HepG2 (cell line): ENCODE measurements at regions of chr2 and their contacts with region 1.

Region 1: DNA sequence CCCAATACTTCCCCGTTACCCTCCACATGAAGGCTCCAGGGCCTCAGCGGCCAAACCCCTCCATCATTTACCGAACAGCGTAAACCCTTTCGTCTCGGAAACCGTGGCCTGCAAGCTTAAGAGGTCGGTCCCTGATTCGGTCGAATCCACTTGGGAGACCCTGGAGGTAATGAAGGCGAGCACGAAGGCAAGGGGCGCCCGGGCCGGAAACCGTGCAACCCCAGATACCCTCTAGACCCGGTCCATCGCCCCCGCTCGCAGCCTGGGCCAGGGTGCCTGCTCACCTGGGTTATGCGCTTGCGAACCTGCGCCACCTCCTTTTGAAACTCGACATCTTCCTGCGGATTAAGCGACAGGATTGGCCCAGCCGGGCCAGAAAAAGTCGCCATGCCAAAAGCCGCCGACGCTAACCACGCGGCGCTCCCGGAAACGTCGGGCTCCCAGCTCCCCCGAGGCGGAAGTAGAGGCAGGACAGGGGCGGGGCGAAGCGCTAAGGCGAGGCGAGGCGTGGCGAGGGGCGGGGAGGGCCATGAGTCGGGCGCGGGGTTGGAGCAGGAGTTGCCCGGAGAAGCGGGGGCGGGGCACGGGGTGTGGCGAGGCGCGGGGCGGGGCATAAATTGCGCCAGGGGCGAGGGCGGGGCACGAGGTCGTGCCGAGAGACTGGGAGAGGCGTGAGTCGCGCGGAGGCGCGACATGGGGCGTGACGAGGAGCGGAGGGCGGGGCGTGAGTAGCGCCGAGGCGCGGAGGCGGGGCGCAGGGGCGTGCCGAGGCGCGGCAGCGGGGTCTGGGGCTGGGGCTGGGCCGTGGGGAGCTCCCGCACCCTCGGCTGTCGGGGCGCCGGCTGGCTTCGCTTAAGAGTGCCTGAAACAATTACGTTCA is at the start of gene NIFK:
- DNase-seq: peak; percentile 96
- ATAC-seq: peak; percentile 95
- H3K4me3 ChIP-seq: peak within 1 kb of the TSS; percentile 87 to 100 (median 91)
- H3K27ac ChIP-seq: peak within 1 kb of the TSS; percentile 66
- H3K4me1 ChIP-seq: peaks cover 27% of the 10 kb centered on the region
- H3K27me3 ChIP-seq: peaks cover 2 to 25% of the 10 kb centered on the region in 2 experiments; a peak in 2 of 5 replicates
- CTCF ChIP-seq: no peak; the same call in none of the 2 replicates
- EP300 ChIP-seq: peak in 1 of 2 experiments; percentile 7; a peak in 1 of 4 replicates
- POLR2A ChIP-seq: peak; percentile 75 to 84
- RAD21 ChIP-seq: peak; percentile 37
- total RNA-seq, gene NIFK: 105 and 178 TPM in 2 replicates

Region 2: DNA sequence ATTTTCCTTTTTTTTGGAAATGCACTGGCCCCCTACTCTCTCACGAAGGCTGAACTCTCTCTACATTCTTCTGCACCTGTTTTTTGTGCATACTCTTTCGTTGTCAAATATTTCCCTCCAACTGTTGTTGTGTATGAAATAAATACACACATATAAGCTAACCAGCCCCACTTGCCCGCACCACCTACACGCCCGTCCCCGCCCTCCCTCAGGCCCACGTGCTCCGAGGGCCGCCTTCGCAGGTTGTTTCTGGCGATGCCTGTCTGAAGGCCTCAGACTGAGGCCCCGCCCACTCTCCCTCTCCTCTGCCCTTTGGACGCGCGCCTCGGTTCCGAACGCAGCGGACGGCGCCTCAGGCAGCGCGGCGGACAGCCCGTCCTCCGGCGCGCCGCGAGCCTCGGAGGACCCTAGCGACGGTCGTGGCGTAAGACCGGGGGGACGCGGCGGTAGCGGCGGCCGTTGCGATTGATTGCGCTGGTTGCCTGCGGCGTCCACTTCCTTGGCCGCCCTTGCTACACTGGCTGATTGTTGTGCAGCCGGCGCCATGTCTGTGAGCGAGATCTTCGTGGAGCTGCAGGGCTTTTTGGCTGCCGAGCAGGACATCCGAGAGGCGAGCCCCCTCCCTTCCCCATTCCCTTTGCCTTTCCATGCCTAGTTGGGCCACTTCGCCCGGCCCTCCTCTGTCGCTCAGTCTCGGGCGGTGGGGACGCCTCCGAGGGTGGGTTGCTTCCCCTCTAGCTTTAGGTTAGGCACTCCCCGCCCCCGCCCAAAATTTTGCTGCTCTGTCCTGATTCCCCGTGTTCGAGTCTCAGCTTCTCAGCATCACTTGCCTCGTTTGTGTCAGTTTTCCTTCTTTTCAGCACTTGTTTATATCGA is 18.8 kb after region 1 on chr2 and contains the start of gene TSN:
- CTCF ChIA-PET with region 1: no interaction called
- POLR2A ChIA-PET with region 1: interaction called, 23 read pairs
- in situ Hi-C with region 1: no loop called
- intact Hi-C with region 1: loop called (anchors 2 kb)
- DNase-seq: peak; percentile 97
- ATAC-seq: peak; percentile 98
- H3K4me3 ChIP-seq: peak within 1 kb of the TSS; percentile 92 to 98 (median 95)
- H3K27ac ChIP-seq: peak within 1 kb of the TSS; percentile 82
- H3K4me1 ChIP-seq: peaks cover 24% of the 10 kb centered on the region
- H3K27me3 ChIP-seq: peaks cover 0 to 4% of the 10 kb centered on the region in 2 experiments; a peak in 2 of 5 replicates
- CTCF ChIP-seq: peak; percentile 3; the same call in 1 of the 2 replicates
- EP300 ChIP-seq: 0 out of 4 replicates have a peak, but pooled peaks of 1 of the 2 experiments have one; percentile 24
- POLR2A ChIP-seq: peak; percentile 87 to 88
- RAD21 ChIP-seq: peak; percentile 45
- total RNA-seq, gene TSN: 115 and 159 TPM in 2 replicates